H1 (cell line): ENCODE measurements at regions of chr5 and their contacts with region 1.

Region 1: DNA sequence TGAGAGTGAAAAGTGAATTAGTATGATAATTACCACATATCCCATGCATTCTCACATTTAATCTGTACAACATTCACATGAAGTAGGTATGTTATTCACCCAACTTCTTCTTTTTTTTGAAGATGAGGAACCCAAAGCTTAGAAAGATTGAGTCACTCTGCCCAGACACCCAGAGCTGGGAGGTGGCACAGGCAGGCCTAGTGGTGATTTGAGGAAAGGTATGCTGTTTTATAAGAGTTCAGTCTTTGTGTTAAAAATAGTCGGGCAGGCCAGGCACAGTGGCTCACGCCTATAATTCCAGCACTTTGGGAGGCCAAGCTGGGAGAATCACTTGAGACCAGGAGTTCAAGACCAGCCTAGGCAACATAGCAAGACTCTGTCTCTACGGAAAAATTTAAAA is 285.3 kb downstream of the NR3C1 start:
- DNase-seq: no peak
- H3K4me3 ChIP-seq: no peak overlapping the region
- H3K27ac ChIP-seq: no peak overlapping the region
- H3K4me1 ChIP-seq: peaks cover 5 to 11% (median 11%) of the 10 kb centered on the region in 4 experiments; a peak in 6 of 7 replicates
- H3K27me3 ChIP-seq: no peaks in the 10 kb centered on the region
- CTCF ChIP-seq: no peak
- EP300 ChIP-seq: no peak
- POLR2A ChIP-seq: no peak
- RAD21 ChIP-seq: no peak

Region 2: GRCh38 chr5:143106174-143106573 is 12.0 kb before region 1 on chr5:
- CTCF ChIA-PET with region 1: interaction called, 11 read pairs
- POLR2A ChIA-PET with region 1: no interaction called
- DNase-seq: no peak
- H3K4me3 ChIP-seq: no peak overlapping the region
- H3K27ac ChIP-seq: no peak overlapping the region
- H3K4me1 ChIP-seq: peaks cover 3 to 10% (median 3%) of the 10 kb centered on the region in 4 experiments; a peak in 6 of 7 replicates
- H3K27me3 ChIP-seq: no peaks in the 10 kb centered on the region
- CTCF ChIP-seq: peak; percentile 19 to 33 (median 33)
- EP300 ChIP-seq: no peak
- POLR2A ChIP-seq: no peak
- RAD21 ChIP-seq: peak; percentile 59 to 64

Region 3: DNA sequence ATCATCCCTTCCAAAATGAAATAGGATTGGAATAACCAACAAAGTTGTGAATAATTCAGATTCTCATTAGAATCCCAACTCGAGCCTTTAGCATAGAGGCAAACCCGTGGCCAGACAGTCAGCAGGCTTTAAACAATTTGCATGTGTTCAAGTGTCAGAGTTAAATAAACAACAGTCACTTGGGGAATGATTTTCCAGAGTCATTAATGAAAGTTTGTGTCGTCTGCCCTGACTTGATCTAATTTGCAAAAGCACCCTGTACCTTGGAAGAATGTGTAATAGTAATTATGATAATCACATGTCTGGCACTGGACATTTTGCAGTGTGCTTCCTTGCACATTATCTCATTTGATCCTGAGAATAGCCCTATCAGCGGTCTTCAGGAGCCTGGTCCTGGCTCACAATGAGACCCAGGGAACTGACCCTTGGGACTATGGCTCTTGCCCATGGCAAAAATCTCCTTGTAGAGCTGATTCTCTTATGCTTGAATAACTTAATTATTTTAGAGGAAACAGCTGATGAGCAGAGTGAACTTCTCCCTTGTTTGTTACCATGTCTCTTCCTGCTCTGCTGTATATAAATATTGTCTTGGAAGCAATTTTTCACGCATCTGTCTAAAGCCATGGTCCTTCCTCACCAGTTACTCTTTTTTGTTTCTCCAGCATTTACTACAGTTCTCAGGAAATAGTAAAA is 12.5 kb after region 1 on chr5:
- CTCF ChIA-PET with region 1: interaction called, 11 read pairs
- POLR2A ChIA-PET with region 1: interaction called, 4 read pairs
- DNase-seq: no peak
- H3K4me3 ChIP-seq: no peak overlapping the region
- H3K27ac ChIP-seq: no peak overlapping the region
- H3K4me1 ChIP-seq: peaks cover 0 to 3% (median 0%) of the 10 kb centered on the region in 4 experiments; a peak in 3 of 7 replicates
- H3K27me3 ChIP-seq: no peaks in the 10 kb centered on the region
- CTCF ChIP-seq: no peak
- EP300 ChIP-seq: no peak
- POLR2A ChIP-seq: no peak
- RAD21 ChIP-seq: no peak